ENCODE measurements at regions of chr5 and their contacts with region 1.

Region 1: GRCh38 chr5:96093890-96094381 is 132.3 kb upstream of the ELL2 start:
- DNase-seq: no peak
- ATAC-seq: no peak
- H3K4me3 ChIP-seq: no peak overlapping the region
- H3K4me3 Mint-ChIP-seq: no peak overlapping the region
- H3K27ac ChIP-seq: no peak overlapping the region
- H3K27ac Mint-ChIP-seq: no peak overlapping the region
- H3K4me1 ChIP-seq: no peaks in the 10 kb centered on the region
- H3K4me1 Mint-ChIP-seq: no peaks in the 10 kb centered on the region
- H3K27me3 ChIP-seq: no peaks in the 10 kb centered on the region
- H3K27me3 Mint-ChIP-seq: no peaks in the 10 kb centered on the region

Region 2: GRCh38 chr5:95822542-95823181 is 271.3 kb before region 1 on chr5 and contains the start of gene GLRX:
- CTCF ChIA-PET with region 1: no interaction called
- POLR2A ChIA-PET with region 1: no interaction called
- DNase-seq: peak in 29 of 35 experiments; percentile 10 to 70 (median 45)
- ATAC-seq: peak; percentile 44 to 57 (median 50)
- H3K4me3 ChIP-seq: peak within 1 kb of the TSS; percentile 59 to 99
- H3K4me3 Mint-ChIP-seq: peak within 1 kb of the TSS; percentile 98 to 99 (median 98)
- H3K27ac ChIP-seq: peak within 1 kb of the TSS; percentile 86
- H3K27ac Mint-ChIP-seq: peak within 1 kb of the TSS; percentile 97 to 99
- H3K4me1 ChIP-seq: peaks cover 51 to 65% of the 10 kb centered on the region in 2 experiments
- H3K4me1 Mint-ChIP-seq: peaks cover 69 to 80% (median 75%) of the 10 kb centered on the region in 3 donors
- H3K27me3 ChIP-seq: no peaks in the 10 kb centered on the region
- H3K27me3 Mint-ChIP-seq: no peaks in the 10 kb centered on the region
- total RNA-seq, gene GLRX: 27.6 to 73.3 (median 56.8) TPM

Region 3: GRCh38 chr5:96081276-96081858 is 12.6 kb before region 1 on chr5:
- CTCF ChIA-PET with region 1: interaction called in 1 of 2 experiments, 10 read pairs
- POLR2A ChIA-PET with region 1: no interaction called
- DNase-seq: no peak
- ATAC-seq: no peak
- H3K4me3 ChIP-seq: no peak overlapping the region
- H3K4me3 Mint-ChIP-seq: no peak overlapping the region
- H3K27ac ChIP-seq: no peak overlapping the region
- H3K27ac Mint-ChIP-seq: no peak overlapping the region
- H3K4me1 ChIP-seq: no peaks in the 10 kb centered on the region
- H3K4me1 Mint-ChIP-seq: no peaks in the 10 kb centered on the region
- H3K27me3 ChIP-seq: no peaks in the 10 kb centered on the region
- H3K27me3 Mint-ChIP-seq: peaks cover 10 to 20% of the 10 kb centered on the region in 2 donors

Region 4: DNA sequence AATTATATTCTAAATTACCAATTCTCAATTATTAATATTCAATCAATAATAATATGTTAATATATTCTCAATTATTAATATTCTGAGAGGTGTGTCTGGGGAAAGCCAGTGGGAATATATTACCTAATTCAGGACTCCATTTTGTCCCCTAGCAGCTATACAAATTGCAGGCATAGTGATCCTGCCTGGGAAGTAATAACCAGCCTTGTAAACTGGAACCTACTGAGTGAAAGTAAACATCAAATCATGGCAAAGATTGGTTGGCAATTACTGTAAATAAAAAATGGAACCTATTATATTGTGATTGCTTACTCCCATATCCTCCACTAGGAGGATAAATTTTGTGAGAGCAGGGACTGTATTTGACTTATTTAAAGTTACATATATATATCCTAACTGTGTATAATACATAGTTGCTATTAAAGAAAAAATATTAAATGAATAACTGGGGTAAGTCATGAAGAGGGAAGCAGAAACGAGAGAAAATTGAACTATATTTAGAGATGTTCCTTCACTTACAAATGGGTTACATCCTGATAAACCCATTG is 18.3 kb after region 1 on chr5:
- CTCF ChIA-PET with region 1: no interaction called
- POLR2A ChIA-PET with region 1: interaction called in 1 of 2 experiments, 15 read pairs
- DNase-seq: no peak
- ATAC-seq: no peak
- H3K4me3 ChIP-seq: no peak overlapping the region
- H3K4me3 Mint-ChIP-seq: no peak overlapping the region
- H3K27ac ChIP-seq: no peak overlapping the region
- H3K27ac Mint-ChIP-seq: no peak overlapping the region
- H3K4me1 ChIP-seq: no peaks in the 10 kb centered on the region
- H3K4me1 Mint-ChIP-seq: peaks cover 0 to 5% (median 5%) of the 10 kb centered on the region in 3 donors
- H3K27me3 ChIP-seq: no peaks in the 10 kb centered on the region
- H3K27me3 Mint-ChIP-seq: peaks cover 0 to 4% of the 10 kb centered on the region in 2 donors